ENCODE measurements at regions of chr3 and their contacts with region 1.

Region 1: GRCh38 chr3:162366166-162366766 is 869.7 kb downstream of the OTOL1 start:
- DNase-seq: no peak
- H3K4me3 ChIP-seq: no peak overlapping the region
- H3K27ac ChIP-seq: no peak overlapping the region
- H3K4me1 ChIP-seq: no peaks in the 10 kb centered on the region
- H3K27me3 ChIP-seq: no peaks in the 10 kb centered on the region
- CTCF ChIP-seq: no peak

Region 2: GRCh38 chr3:162285259-162285658 is 81.0 kb before region 1 on chr3:
- CTCF ChIA-PET with region 1: no interaction called
- dilution Hi-C with region 1: no loop called
- in situ Hi-C with region 1: no loop called
- intact Hi-C with region 1: no loop called
- DNase-seq: no peak
- H3K4me3 ChIP-seq: no peak overlapping the region
- H3K27ac ChIP-seq: no peak overlapping the region
- H3K4me1 ChIP-seq: no peaks in the 10 kb centered on the region
- H3K27me3 ChIP-seq: no peaks in the 10 kb centered on the region
- CTCF ChIP-seq: no peak

Region 3: GRCh38 chr3:162354356-162354755 is 11.9 kb before region 1 on chr3:
- CTCF ChIA-PET with region 1: interaction called, 17 read pairs
- dilution Hi-C with region 1: no loop called
- in situ Hi-C with region 1: no loop called
- intact Hi-C with region 1: no loop called
- DNase-seq: no peak
- H3K4me3 ChIP-seq: no peak overlapping the region
- H3K27ac ChIP-seq: no peak overlapping the region
- H3K4me1 ChIP-seq: no peaks in the 10 kb centered on the region
- H3K27me3 ChIP-seq: peaks cover 4% of the 10 kb centered on the region
- CTCF ChIP-seq: no peak